ENCODE measurements at regions of chr1 and their contacts with region 1.

Region 1: GRCh38 chr1:168287237-168287664 is 6.6 kb downstream of the TBX19 start:
- DNase-seq: peak; percentile 55
- H3K4me3 ChIP-seq: no peak overlapping the region
- H3K27ac ChIP-seq: peak overlapping the region; percentile 42
- H3K4me1 ChIP-seq: peaks cover 14% of the 10 kb centered on the region
- H3K27me3 ChIP-seq: no peaks in the 10 kb centered on the region
- CTCF ChIP-seq: no peak
- POLR2A ChIP-seq: no peak

Region 2: DNA sequence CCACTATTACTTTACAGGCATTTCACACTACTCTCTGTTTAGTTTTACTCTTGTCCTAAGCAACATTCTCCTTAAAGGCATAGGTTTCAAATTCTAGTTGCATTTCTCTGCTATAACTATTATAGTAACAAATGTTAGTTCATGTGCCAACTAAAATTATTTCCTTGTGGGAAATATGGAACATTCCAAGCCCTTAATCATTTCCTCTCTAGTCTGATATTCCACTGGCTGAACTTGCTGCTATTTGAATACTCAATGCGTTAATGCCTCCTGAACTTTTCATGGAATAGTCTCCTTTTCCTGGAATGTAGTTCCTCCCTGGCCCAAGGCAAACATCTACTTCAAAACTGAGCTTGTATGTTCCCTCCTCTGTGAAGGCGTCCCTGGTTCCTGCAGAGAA is 25.9 kb before region 1 on chr1:
- CTCF ChIA-PET with region 1: interaction called, 4 read pairs
- POLR2A ChIA-PET with region 1: no interaction called
- dilution Hi-C with region 1: no loop called
- intact Hi-C with region 1: loop called (anchors 1 kb)
- DNase-seq: peak; percentile 90
- H3K4me3 ChIP-seq: peak overlapping the region in 1 of 3 experiments; percentile 39
- H3K27ac ChIP-seq: peak overlapping the region; percentile 84
- H3K4me1 ChIP-seq: peaks cover 28% of the 10 kb centered on the region
- H3K27me3 ChIP-seq: no peaks in the 10 kb centered on the region
- CTCF ChIP-seq: no peak
- POLR2A ChIP-seq: no peak

Region 3: GRCh38 chr1:168273575-168273974 is 13.7 kb before region 1 on chr1:
- CTCF ChIA-PET with region 1: no interaction called
- POLR2A ChIA-PET with region 1: no interaction called
- dilution Hi-C with region 1: no loop called
- intact Hi-C with region 1: no loop called
- DNase-seq: no peak
- H3K4me3 ChIP-seq: no peak overlapping the region
- H3K27ac ChIP-seq: no peak overlapping the region
- H3K4me1 ChIP-seq: no peaks in the 10 kb centered on the region
- H3K27me3 ChIP-seq: no peaks in the 10 kb centered on the region
- CTCF ChIP-seq: no peak
- POLR2A ChIP-seq: no peak

Region 4: GRCh38 chr1:168321945-168322344 is 34.7 kb after region 1 on chr1:
- CTCF ChIA-PET with region 1: no interaction called
- POLR2A ChIA-PET with region 1: no interaction called
- dilution Hi-C with region 1: no loop called
- intact Hi-C with region 1: loop called (anchors 2 kb)
- DNase-seq: peak; percentile 56
- H3K4me3 ChIP-seq: no peak overlapping the region
- H3K27ac ChIP-seq: no peak overlapping the region
- H3K4me1 ChIP-seq: peaks cover 18% of the 10 kb centered on the region
- H3K27me3 ChIP-seq: no peaks in the 10 kb centered on the region
- CTCF ChIP-seq: peak; percentile 4 to 40
- POLR2A ChIP-seq: no peak

Region 5: DNA sequence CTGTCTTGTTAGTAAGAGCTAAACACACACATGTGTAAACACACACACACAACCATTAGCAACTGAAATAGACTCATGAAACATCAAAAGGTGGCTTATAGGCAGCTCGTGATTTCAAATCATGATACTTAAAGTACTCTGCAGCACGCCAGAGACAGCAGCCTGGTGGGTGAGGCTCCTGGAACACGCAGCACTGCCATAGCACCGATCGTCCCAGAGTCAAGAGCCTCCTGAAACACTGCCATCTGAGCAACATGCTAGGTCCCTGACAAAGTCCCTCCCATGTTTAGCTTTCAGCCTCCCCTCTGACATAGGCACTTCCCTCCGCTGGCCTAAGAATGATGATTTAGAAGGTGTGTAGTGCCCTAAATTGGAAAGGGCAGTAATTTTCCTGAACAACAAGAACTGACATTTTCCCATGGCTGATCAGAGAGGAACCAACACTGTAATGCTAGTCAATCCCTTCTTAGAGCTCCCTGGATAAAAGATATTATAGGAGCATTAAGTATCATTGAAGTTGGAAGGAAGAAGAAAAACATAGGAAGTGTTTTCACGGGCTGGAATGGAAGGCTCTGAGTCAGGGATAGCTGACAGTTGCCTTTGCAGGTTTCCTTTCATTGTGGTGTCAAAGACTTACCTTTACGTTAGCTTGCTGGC is 455.9 kb after region 1 on chr1:
- CTCF ChIA-PET with region 1: no interaction called
- POLR2A ChIA-PET with region 1: no interaction called
- dilution Hi-C with region 1: no loop called
- intact Hi-C with region 1: no loop called
- DNase-seq: no peak
- H3K4me3 ChIP-seq: no peak overlapping the region
- H3K27ac ChIP-seq: no peak overlapping the region
- H3K4me1 ChIP-seq: no peaks in the 10 kb centered on the region
- H3K27me3 ChIP-seq: no peaks in the 10 kb centered on the region
- CTCF ChIP-seq: no peak
- POLR2A ChIP-seq: no peak

Measured in endothelial cell of umbilical vein (primary cell).